PC-9 (cell line): ENCODE measurements at regions of chr6 and their contacts with region 1.

Region 1: DNA sequence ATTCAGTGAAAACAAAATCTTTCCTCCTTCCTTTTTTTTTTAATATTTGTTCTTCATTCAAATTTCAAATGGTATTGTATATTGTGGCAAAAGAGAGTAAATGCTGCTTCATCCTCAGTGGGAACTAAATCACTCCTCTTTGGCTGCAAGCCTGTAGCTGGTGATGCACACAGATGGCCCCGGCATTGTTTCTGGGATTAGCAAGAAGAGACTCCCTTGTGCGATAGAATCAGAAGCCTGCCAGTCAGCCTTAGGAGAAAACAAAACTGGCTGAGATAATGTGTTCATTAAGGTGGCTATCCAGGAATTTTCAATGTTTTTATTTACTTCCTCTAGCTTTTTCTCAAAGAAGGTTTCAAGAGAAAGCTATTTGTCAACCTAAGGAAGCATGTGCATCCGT is 20.7 kb upstream of the ELOVL2 start:
- DNase-seq: no peak
- H3K4me3 ChIP-seq: no peak overlapping the region
- H3K27ac ChIP-seq: no peak overlapping the region
- H3K4me1 ChIP-seq: no peaks in the 10 kb centered on the region
- H3K27me3 ChIP-seq: no peaks in the 10 kb centered on the region
- CTCF ChIP-seq: no peak

Region 2: DNA sequence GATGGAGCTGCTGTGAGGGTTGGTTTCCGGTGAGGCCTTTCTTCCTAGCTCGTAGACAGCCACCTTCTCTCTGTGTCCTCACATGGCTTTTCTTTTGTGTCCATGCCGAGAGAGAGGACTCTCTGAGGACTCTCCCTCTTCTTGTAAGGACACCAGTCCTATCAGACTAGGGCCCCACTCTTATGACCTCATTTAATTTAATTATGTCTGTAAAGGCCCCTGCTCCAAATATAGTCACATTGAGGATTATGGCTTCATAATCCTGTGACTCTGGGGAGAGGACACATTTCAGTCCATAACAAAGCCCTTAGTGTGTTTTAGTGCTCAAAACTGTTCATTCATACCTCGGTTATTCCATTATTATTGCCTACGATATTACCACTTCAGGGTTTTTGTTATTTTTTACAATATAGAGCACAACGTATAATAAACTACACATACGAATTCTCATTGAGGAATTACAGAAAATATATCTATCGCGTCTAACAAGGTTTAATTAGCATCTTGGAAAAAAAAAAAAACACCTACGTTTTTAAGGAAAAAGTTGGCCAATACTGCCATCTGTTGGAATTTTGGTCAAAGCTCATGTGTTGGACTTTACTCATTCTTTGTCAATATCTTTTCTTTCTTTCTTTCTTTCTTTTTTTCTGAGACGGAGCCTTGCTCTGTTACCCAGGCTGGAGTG is 630.0 kb before region 1 on chr6:
- CTCF ChIA-PET with region 1: no interaction called
- POLR2A ChIA-PET with region 1: no interaction called
- intact Hi-C with region 1: loop called (anchors 5 kb)
- DNase-seq: no peak
- H3K4me3 ChIP-seq: no peak overlapping the region; the same call in 1 of the 2 replicates
- H3K27ac ChIP-seq: no peak overlapping the region
- H3K4me1 ChIP-seq: no peaks in the 10 kb centered on the region
- H3K27me3 ChIP-seq: no peaks in the 10 kb centered on the region
- CTCF ChIP-seq: peak; percentile 72

Region 3: DNA sequence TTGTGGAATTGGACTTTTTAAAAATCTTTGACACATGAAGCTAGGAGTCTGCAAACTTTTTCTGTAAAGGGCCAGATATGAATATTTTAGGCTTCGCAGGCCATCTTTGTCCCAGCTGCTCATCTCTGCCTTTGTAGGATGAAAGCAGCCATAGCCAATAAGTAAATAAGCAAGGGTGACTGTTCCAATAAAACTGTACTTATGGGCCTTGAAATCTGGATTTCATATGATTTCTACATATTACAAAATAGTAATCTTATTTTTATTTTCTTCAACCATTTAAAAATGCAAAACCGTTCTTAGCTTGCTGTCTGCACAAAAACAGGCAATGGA is 329.8 kb before region 1 on chr6:
- CTCF ChIA-PET with region 1: no interaction called
- POLR2A ChIA-PET with region 1: interaction called, 11 read pairs
- intact Hi-C with region 1: no loop called
- DNase-seq: no peak
- H3K4me3 ChIP-seq: no peak overlapping the region
- H3K27ac ChIP-seq: peak overlapping the region; percentile 84
- H3K4me1 ChIP-seq: peaks cover 10% of the 10 kb centered on the region
- H3K27me3 ChIP-seq: no peaks in the 10 kb centered on the region
- CTCF ChIP-seq: no peak

Region 4: DNA sequence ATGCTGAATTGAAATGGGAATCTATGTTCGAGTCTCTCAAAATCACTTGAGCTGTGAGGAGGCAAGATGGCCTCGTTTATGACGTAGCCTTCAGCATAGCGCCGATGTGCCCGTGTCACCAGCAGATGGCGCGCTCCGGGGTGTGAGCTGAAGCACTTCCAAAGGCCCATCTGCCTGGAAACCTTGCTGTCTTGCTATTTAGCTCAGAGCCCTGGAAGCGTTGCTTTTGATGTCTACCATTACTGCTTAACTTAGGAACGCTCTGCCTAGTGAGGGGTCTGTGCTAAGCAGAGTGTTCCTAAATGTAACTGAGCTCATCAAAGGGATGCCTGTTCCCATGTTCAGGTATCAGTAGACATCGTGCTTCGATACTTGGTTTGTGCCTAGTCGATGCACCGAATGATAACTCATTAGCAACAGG is 110.2 kb before region 1 on chr6:
- CTCF ChIA-PET with region 1: interaction called, 12 read pairs
- POLR2A ChIA-PET with region 1: no interaction called
- intact Hi-C with region 1: loop called (anchors 1 kb)
- DNase-seq: peak in 1 of 2 experiments; percentile 57
- H3K4me3 ChIP-seq: no peak overlapping the region
- H3K27ac ChIP-seq: no peak overlapping the region
- H3K4me1 ChIP-seq: no peaks in the 10 kb centered on the region
- H3K27me3 ChIP-seq: no peaks in the 10 kb centered on the region
- CTCF ChIP-seq: peak; percentile 46

Region 5: DNA sequence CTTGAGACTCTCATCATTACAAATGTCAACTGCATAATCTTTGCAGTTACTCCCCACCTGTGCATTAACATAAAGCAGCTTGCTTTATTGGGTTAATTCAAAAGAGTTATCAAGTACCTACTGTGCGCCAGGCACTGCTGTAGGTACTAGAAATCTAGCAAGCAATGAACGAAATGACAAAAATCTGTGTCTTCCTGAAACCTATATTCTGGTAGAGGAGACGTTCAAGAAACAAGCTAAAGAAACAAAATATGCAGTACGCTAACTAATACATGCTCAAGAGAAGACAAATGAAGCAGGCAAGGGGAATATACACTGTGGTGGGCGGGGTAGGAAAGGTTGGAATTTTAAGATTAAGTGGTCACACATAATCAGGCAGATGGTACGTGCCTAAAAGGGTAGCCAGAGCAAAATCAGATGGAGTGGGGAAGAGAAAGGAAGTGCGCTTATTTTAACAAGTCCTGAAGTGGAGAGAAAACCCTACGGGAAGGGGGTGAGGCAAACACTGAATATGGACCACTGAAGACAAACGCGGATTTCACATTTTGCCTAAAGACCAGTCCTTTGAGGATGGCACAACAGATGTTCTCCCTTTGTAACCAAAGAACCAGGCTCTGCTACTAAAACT is 22.0 kb before region 1 on chr6:
- CTCF ChIA-PET with region 1: interaction called, 15 read pairs
- POLR2A ChIA-PET with region 1: no interaction called
- intact Hi-C with region 1: no loop called
- DNase-seq: no peak
- H3K4me3 ChIP-seq: no peak overlapping the region
- H3K27ac ChIP-seq: no peak overlapping the region
- H3K4me1 ChIP-seq: no peaks in the 10 kb centered on the region
- H3K27me3 ChIP-seq: no peaks in the 10 kb centered on the region
- CTCF ChIP-seq: no peak

Region 6: DNA sequence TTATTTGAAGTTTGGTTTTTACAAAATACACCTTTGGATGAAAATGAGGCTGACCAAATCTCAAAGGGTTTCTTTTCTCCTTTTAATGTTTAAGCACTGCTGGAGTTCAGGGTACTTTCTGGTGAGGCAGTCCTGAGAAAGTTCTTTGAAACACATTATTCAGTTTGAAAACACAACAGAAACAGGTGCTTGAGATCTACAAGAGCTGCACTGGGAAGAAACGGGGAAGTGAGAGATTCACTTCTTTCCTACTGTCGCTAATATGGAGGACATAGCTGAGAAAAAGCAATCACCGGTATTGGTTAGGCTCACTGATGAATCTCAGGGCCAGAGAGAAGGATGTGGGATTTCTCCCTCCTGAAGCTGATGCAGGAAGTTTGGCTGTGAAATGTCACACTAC is 449.8 kb after region 1 on chr6:
- CTCF ChIA-PET with region 1: no interaction called
- POLR2A ChIA-PET with region 1: no interaction called
- intact Hi-C with region 1: no loop called
- DNase-seq: no peak
- H3K4me3 ChIP-seq: no peak overlapping the region
- H3K27ac ChIP-seq: no peak overlapping the region
- H3K4me1 ChIP-seq: no peaks in the 10 kb centered on the region
- H3K27me3 ChIP-seq: no peaks in the 10 kb centered on the region
- CTCF ChIP-seq: no peak